Ascending aorta (tissue), 2 donors: ENCODE measurements at regions of chr22 and their contacts with region 1.

Region 1: GRCh38 chr22:40636380-40637182 is at the start of gene MRTFA:
- DNase-seq: peak; percentile 100
- H3K4me3 ChIP-seq: peak within 1 kb of the TSS; percentile 83 to 91
- H3K27ac ChIP-seq: peak within 1 kb of the TSS; percentile 86 to 92
- H3K4me1 ChIP-seq: peaks cover 0 to 12% of the 10 kb centered on the region in 2 donors
- H3K27me3 ChIP-seq: no peaks in the 10 kb centered on the region
- CTCF ChIP-seq: no peak
- total RNA-seq, gene MRTFA: 99.3 TPM

Region 2: GRCh38 chr22:40368016-40368415 is 268.6 kb before region 1 on chr22:
- intact Hi-C with region 1: loop called (anchors 1 kb)
- DNase-seq: no peak
- H3K4me3 ChIP-seq: no peak overlapping the region
- H3K27ac ChIP-seq: no peak overlapping the region
- H3K4me1 ChIP-seq: peaks cover 0 to 2% of the 10 kb centered on the region in 2 donors
- H3K27me3 ChIP-seq: no peaks in the 10 kb centered on the region
- CTCF ChIP-seq: no peak

Region 3: DNA sequence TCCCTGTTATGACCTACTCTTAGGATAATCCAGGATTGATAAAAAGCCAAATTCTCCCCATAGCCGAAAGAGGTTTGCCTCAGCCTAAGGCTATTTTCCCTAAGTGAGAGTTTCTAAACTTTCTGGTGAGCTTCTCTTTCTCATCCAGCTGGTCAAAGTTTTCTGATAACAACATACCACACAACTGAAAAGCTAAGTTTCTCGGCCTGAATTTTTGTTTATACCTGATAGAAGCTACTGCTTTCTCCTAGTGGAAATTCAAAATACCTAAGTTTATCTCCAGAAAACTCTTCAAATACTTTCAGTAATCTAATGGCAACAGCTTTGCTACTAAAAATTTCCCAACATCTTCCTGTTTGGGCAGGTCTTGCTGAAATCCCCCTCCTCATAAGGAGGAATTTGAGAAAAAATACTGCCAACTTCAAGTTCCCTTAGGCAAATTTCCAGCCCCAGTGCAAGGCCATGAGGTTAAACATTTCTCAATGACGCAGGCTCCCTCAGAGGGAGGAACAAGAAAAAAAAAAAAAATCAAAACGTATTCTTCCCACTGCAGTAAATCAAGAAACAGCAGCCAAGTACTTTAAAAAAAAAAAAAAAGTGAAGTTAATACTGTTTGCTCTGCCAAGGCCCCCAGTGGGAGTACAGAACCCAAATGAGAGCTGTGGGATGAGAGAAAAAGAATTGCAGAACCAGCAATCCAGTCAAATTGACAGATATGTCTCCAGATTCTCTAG is 127.0 kb before region 1 on chr22:
- intact Hi-C with region 1: loop called (anchors 5 kb)
- DNase-seq: peak in 1 of 2 donors; percentile 75
- H3K4me3 ChIP-seq: peak overlapping the region in 1 of 2 donors; percentile 11
- H3K27ac ChIP-seq: peak overlapping the region; percentile 87 to 88
- H3K4me1 ChIP-seq: peaks cover 28 to 58% of the 10 kb centered on the region in 2 donors
- H3K27me3 ChIP-seq: no peaks in the 10 kb centered on the region
- CTCF ChIP-seq: no peak

Region 4: DNA sequence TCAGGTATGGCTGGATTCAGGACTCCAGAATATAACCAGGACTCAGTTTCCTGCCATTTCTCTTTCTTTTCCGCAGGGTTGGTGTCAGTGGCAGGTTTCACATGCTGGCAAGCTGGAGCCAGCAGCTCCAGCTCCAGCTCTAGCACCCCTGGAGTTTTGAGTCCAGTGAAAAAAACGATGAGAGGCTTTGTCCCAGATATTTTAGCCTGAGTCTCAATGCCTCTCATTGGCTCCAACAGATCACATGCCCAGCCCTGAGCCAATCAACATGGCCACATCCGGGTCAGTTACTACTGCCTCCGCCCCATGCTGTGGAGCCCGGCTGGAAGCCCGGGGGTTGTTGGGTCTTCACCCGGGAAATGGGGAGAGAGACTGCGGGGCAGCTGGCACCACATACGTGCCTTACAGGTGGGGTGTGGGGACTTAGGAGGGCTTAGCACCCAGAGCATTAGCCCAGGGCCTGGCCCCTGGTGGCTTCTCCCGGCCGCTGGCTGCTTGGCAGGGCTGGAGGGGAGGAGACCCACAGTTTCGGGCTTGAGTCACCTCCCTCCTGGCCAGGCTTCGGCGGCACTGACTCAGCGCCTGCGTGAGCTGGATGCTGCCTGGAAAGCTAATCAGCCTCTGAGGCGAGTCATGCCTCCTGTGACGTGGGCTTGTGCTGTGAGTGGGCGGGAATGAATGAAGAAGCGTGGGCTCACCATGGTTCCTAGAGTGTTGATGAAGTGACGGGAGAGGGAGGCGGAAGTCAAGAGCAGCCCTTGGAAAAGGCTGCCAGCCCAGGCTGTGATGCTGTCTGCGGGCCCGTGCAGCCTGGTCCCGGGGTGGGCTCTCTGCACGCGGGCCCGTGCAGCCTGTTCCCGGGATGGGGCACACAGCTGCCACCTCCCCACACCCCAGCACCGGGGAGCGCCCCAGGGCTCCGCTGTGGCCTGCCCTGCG is 15.3 kb after region 1 on chr22:
- intact Hi-C with region 1: loop called (anchors 1 kb)
- DNase-seq: peak; percentile 95 to 99
- H3K4me3 ChIP-seq: peak overlapping the region; percentile 68 to 70
- H3K27ac ChIP-seq: peak overlapping the region; percentile 97
- H3K4me1 ChIP-seq: peaks cover 5 to 26% of the 10 kb centered on the region in 2 donors
- H3K27me3 ChIP-seq: no peaks in the 10 kb centered on the region
- CTCF ChIP-seq: peak in 1 of 3 experiments; percentile 4

Region 5: GRCh38 chr22:40703174-40703573 is 66.6 kb after region 1 on chr22:
- intact Hi-C with region 1: no loop called
- DNase-seq: no peak
- H3K4me3 ChIP-seq: no peak overlapping the region
- H3K27ac ChIP-seq: no peak overlapping the region
- H3K4me1 ChIP-seq: no peaks in the 10 kb centered on the region
- H3K27me3 ChIP-seq: no peaks in the 10 kb centered on the region
- CTCF ChIP-seq: no peak

Region 6: DNA sequence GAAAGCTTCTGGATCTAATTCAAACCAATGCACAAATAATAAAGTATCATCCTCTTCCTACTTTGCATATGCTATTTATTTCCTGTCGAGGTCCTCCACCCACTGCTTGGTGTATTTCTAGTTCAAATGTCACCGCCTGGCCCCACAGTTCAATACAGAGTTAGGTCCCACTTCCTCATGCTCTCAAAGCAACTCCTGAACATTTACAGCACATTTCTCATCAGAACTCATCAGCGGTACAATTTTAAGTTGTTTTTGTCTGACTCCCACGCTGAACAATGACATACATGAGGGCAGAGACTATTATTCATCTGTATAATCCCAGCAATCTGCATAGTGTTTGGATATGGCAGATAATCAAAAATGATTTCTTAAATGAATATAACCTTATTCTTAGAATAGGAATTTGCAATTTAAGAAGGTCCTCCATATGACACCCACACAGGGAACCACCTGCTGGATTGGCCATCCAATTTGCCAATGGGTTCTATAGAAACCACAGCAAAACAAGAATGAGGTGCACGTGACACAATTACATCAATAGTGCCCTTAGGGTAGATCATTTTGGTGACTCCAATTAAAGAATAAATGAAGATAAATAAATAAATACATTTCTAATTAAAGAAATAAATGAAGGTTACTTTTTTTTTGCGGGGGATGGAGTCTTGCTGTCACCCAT is 128.3 kb after region 1 on chr22:
- intact Hi-C with region 1: no loop called
- DNase-seq: no peak
- H3K4me3 ChIP-seq: no peak overlapping the region
- H3K27ac ChIP-seq: no peak overlapping the region
- H3K4me1 ChIP-seq: no peaks in the 10 kb centered on the region
- H3K27me3 ChIP-seq: no peaks in the 10 kb centered on the region
- CTCF ChIP-seq: no peak

Region 7: GRCh38 chr22:41204992-41205900 is 568.7 kb after region 1 on chr22 and contains the start of gene L3MBTL2:
- intact Hi-C with region 1: loop called (anchors 5 kb)
- DNase-seq: peak; percentile 95 to 99
- H3K4me3 ChIP-seq: peak within 1 kb of the TSS; percentile 63 to 89
- H3K27ac ChIP-seq: peak within 1 kb of the TSS; percentile 72 to 73
- H3K4me1 ChIP-seq: peaks cover 4 to 5% of the 10 kb centered on the region in 2 donors
- H3K27me3 ChIP-seq: no peaks in the 10 kb centered on the region
- CTCF ChIP-seq: no peak
- total RNA-seq, gene L3MBTL2: 33.3 TPM

Region 8: GRCh38 chr22:41888627-41889200 is 1252.1 kb after region 1 on chr22:
- intact Hi-C with region 1: no loop called
- DNase-seq: no peak
- H3K4me3 ChIP-seq: no peak overlapping the region
- H3K27ac ChIP-seq: no peak overlapping the region
- H3K4me1 ChIP-seq: no peaks in the 10 kb centered on the region
- H3K27me3 ChIP-seq: no peaks in the 10 kb centered on the region
- CTCF ChIP-seq: no peak